Dorsolateral prefrontal cortex (tissue), 120 donors: ENCODE measurements at regions of chr5 and their contacts with region 1.

Region 1: DNA sequence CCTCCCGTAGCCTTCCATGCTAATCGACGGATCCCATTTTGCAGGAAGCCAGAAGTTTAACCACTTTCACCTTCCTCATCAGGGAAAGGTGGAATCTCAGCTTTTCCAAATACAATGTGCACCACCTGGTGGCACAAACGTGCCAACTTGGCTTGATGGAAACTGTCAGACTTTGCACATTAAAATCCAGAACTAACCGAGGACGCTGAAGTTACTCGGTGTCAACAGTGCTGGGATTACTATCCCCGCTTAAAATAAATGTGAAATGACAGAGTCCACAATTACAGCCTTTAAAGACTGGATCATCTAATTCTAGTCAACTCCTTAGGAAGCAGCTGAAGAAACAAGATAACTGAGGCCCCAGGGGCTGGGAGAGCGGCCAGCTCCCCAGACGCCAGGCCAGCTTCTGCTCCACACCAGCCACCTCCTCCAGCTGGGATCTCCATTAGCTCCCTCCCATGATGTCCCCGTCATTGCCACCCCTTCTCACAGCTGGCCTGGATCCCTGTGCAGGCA is 50.1 kb upstream of the RETREG1 start:
- DNase-seq: peak in 7 of 10 donors; percentile 35 to 68 (median 60)
- H3K4me3 ChIP-seq: peak overlapping the region in 26 of 59 donors; percentile 3 to 46 (median 18)
- H3K27ac ChIP-seq: peak overlapping the region in 57 of 59 donors; percentile 1 to 84 (median 72)
- H3K27me3 ChIP-seq: no peaks in the 10 kb centered on the region
- CTCF ChIP-seq: peak; percentile 39 to 80 (median 65)

Region 2: DNA sequence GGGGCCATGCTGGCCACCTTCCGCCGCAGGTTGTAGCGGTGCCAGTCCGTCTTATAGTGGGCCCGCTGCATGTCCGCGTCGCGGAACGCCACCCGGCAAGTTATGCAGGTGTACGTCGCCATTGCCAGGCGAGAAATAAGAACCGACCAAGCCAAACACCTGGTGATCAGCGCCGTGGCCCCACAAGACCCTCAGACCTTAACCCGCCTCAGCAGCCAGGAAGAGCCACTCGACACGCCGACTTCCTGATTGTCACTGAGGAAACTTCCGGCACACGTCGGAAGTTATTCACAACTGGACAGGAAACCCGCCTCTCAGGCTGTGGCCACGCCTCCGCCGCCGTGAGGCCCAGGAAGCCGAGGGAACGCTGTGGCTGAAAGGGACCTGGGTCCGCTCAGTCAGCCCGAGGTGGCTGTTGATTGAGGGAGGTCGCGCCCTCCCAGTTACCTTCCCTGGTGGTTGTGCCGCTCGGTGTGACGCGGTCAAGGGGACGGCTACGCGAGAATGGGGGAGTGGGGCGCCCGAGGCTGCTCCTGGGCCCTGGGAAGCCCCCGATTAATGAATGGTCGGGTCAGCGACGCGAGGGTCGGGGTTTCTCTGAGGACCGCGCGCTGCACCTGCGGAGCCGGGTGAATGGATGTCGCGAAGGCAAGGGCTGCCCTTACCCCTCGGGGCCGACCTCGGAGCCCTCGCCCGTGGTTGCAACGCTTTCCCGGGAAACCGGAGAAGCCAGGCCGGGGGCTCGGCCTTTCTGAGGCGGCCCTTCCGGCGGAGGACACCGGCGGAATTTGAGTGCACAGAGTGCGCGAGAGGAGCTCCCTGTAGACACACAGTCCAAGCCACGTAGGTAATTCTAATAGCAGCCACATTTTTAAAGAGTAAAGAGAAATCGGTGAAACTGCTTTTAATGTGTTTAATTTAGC is 201.1 kb before region 1 on chr5 and contains the start of gene ZNF622:
- intact Hi-C with region 1: loop called in 1 of 2 experiments (anchors 5 kb)
- DNase-seq: peak; percentile 75 to 93 (median 92)
- H3K4me3 ChIP-seq: peak within 1 kb of the TSS; percentile 69 to 100 (median 96)
- H3K27ac ChIP-seq: peak within 1 kb of the TSS in 55 of 59 donors; percentile 31 to 93 (median 78)
- H3K27me3 ChIP-seq: no peaks in the 10 kb centered on the region
- CTCF ChIP-seq: peak in 29 of 56 donors; percentile 1 to 54 (median 14)
- total RNA-seq, gene ZNF622: 18.1 to 43.6 (median 33.3) TPM

Region 3: GRCh38 chr5:16489322-16489791 is 177.6 kb before region 1 on chr5:
- intact Hi-C with region 1: loop called (anchors 1 to 2 kb)
- DNase-seq: peak in 2 of 10 donors; percentile 21 to 30
- H3K4me3 ChIP-seq: no peak overlapping the region
- H3K27ac ChIP-seq: peak overlapping the region in 39 of 59 donors; percentile 0 to 77 (median 44)
- H3K27me3 ChIP-seq: no peaks in the 10 kb centered on the region
- CTCF ChIP-seq: peak; percentile 71 to 97 (median 84)

Region 4: DNA sequence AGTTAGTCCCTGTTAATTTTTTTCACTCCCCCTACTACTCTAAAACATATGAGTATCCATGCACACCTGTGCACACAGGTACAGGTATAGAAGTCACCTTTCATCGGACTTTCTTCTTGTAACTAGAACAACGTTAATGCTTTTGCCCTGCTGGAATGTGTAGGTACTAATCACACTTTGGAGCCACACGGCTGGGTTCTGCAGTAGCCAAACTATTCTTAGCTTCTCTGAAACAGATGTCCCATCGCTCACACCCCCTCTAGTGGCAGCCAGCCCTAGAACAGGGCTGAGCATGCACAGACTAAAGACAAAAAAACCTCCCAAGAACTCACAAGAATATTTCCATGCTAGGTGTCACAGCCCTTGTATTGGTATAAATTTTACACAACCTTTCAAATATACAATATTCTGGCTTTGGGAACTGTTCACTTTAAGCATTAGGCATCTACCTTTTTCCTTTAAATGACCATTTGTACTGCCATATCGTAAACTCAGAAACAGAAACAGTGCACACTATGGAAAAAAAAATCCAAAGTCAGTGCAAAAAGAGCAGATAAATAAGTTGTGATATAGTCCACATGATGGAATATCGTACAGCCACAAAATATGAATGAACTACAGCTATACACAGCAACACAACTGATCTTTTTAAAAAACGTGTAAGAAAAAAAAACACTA is 114.1 kb before region 1 on chr5:
- intact Hi-C with region 1: loop called in 1 of 2 experiments (anchors 5 kb)
- DNase-seq: peak; percentile 73 to 92 (median 88)
- H3K4me3 ChIP-seq: no peak overlapping the region
- H3K27ac ChIP-seq: peak overlapping the region in 58 of 59 donors; percentile 20 to 98 (median 83)
- H3K27me3 ChIP-seq: no peaks in the 10 kb centered on the region
- CTCF ChIP-seq: peak; percentile 25 to 92 (median 78)

Region 5: DNA sequence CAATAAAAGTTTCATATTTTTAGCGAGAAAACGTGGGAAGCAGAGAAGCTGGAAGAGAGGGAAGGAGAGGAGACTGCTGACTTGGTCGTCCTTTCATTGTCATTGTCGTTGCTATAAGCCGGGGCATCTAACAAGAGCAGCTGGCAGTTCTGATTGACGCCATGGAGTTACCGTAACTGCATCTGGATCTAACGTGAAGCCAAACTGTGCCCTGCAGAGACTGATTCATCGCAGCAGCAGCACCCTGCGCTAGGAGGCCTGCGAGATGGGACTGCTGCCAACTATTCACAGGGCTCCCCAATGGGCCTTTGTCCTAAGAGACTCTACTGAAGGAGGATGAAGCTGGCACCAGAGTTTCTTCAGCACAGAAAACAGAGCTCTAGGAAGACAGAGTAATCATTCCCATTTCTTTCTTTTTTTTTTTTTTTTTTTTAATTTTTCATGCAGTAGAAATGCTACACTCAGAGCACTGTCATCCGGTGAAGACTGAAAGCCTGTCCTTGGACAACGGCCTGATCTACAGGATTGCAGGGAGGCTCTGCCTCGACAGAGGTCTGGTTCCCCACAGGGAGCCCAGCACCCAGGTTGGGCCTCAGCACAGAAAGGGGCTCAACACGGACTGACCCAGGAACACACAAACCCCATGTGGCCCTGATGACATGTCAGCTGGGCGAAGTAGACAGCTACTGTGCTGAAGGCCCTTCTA is 97.9 kb before region 1 on chr5:
- intact Hi-C with region 1: loop called (anchors 10 kb)
- DNase-seq: peak; percentile 53 to 98 (median 94)
- H3K4me3 ChIP-seq: peak overlapping the region in 7 of 59 donors; percentile 2 to 25 (median 8)
- H3K27ac ChIP-seq: peak overlapping the region; percentile 74 to 99 (median 96)
- H3K27me3 ChIP-seq: no peaks in the 10 kb centered on the region
- CTCF ChIP-seq: peak in 25 of 56 donors; percentile 3 to 48 (median 25)

Region 6: DNA sequence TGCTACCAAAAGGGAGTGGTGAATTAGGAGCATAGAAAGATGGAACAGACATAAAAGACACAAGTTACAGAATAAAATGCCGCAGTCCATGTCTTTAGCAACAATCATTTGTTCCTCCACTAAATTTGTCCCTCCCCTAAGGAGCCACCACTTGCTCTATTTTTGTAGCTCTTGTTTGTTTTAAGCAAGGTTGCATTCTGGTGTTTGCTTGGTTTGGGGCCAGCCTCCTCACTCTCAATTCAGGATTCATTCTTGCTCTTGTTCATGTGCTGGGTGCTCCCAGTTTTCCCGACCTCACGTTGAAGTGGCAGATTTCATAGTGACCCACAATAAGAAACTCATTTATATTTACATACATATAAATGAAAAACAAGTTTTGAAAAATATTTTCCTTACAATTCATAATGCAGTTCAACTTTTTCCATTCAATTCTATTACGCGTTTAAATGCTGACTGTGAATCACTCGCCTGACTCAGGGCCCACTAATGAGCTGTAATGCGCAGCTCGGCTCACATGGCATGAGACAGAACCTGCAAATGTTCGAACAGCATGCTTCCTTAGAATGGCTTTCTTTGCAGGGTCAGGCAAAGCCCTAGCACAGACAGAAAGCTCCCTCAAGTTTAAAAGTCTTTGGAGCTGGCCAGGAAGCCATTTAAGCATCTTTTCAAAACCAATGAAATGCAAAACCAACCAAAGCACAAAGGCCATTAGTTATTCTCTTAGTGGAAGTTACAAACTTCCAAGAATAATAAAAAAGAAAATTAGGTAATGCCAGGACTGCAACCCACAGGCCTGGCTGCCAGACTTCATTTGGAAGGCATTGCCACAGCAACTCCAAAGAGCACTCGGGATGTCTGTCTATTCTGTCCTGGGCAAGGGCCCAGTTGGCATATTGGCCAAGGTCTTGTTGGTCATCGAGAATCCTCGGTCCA is 91.9 kb before region 1 on chr5:
- intact Hi-C with region 1: loop called in 1 of 2 experiments (anchors 10 kb)
- DNase-seq: peak in 7 of 10 donors; percentile 67 to 84 (median 72)
- H3K4me3 ChIP-seq: no peak overlapping the region
- H3K27ac ChIP-seq: peak overlapping the region in 58 of 59 donors; percentile 2 to 99 (median 71)
- H3K27me3 ChIP-seq: no peaks in the 10 kb centered on the region
- CTCF ChIP-seq: no peak

Region 7: DNA sequence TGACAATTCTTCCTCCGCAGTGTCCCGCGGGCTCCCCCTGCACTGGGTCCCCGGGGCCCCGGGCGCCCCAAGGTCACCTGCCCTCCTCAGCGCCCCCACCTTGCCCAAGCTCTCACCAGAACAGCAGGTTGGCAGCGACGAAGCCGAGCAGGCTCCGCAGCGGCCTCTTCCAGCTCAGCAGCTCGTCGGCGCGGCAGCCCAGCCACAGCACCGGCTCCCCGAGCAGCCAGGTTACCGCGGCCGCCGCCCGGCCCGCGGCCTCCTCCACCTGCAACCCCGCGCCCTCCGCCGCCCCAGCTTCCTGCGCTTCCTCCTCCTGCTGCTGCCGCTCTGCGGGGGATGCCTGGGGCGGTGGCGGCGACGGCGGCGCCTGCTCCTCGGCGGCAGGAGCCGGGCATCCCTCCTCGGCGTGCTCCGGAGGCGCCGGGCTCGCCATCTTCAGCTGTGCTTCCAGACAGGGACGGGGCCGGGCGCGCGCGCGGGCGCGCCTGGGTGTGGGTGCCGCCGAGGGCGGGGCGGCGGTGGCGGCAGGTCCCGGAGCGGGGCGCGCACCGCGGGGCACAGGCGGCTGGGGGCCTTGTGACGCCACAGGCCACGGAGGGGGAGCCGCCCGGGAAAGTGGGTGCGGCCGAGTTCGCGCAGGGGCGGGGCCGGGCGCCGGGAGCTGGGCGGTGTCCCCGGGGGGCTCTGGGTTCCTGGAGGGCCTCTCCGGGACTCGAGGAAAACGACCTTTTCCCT is 50.2 kb before region 1 on chr5 and contains the start of gene RETREG1:
- intact Hi-C with region 1: loop called in 1 of 2 experiments (anchors 5 kb)
- DNase-seq: peak; percentile 57 to 89 (median 74)
- H3K4me3 ChIP-seq: peak within 1 kb of the TSS; percentile 67 to 98 (median 88)
- H3K27ac ChIP-seq: peak within 1 kb of the TSS in 58 of 59 donors; percentile 69 to 97 (median 91)
- H3K27me3 ChIP-seq: no peaks in the 10 kb centered on the region
- CTCF ChIP-seq: no peak
- total RNA-seq, gene RETREG1: 26.4 to 149 (median 81.6) TPM

Region 8: DNA sequence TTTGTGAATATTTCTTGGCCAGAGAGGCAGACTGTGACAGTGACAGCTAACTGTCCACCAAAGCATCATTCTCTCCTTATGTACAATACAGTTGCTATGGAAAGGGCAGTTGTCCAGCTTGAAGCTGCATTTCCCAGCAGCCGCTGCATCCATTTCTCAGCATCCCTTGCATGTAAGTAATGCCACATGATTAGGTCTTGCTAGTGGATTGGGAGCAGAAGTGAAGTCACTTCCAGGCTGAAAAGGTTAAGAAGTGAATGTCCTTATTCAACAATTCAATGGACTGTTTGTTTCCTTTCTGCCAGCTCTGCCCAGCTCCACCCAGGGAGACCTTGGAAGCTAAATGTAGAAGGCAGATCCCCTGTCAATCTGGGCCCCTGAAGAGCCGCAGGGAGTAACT is 24.1 kb before region 1 on chr5:
- intact Hi-C with region 1: no loop called
- DNase-seq: no peak
- H3K4me3 ChIP-seq: no peak overlapping the region
- H3K27ac ChIP-seq: peak overlapping the region in 6 of 59 donors; percentile 1 to 64 (median 20)
- H3K27me3 ChIP-seq: no peaks in the 10 kb centered on the region
- CTCF ChIP-seq: no peak

Region 9: GRCh38 chr5:16842896-16843295 is 176.0 kb after region 1 on chr5:
- intact Hi-C with region 1: no loop called
- DNase-seq: no peak
- H3K4me3 ChIP-seq: no peak overlapping the region
- H3K27ac ChIP-seq: no peak overlapping the region
- H3K27me3 ChIP-seq: no peaks in the 10 kb centered on the region
- CTCF ChIP-seq: no peak